ENCODE measurements at regions of chr5 and their contacts with region 1.

Region 1: DNA sequence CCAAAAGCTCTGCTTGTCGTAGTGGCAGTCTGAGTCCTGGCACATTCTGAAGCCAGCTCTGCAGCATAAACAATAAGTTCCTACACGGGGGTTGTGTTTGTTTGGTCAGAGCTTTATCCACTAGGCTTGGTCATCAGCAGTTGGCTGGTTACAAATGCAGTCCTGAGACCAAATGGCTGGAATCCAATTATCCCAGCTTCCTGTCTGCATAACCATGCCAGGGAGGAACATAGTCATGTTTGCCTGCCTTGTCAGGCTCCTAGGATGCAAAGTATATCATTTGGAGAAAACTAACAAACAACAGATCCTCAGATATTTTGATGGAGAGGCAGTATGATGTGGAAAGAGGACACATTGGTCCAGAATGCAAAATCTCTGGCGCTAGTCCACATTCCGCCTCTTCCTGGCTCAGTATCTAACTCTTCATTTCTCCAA is 85.8 kb downstream of the FBXO38 start:
- DNase-seq: no peak
- H3K4me3 ChIP-seq: no peak overlapping the region
- H3K27me3 ChIP-seq: no peaks in the 10 kb centered on the region
- CTCF ChIP-seq: no peak

Region 2: GRCh38 chr5:148482691-148483462 is 13.4 kb after region 1 on chr5:
- CTCF ChIA-PET with region 1: interaction called, 10 read pairs
- POLR2A ChIA-PET with region 1: no interaction called
- DNase-seq: no peak
- H3K4me3 ChIP-seq: no peak overlapping the region
- H3K27me3 ChIP-seq: no peaks in the 10 kb centered on the region
- CTCF ChIP-seq: peak; percentile 71

Region 3: GRCh38 chr5:148542812-148543211 is 73.3 kb after region 1 on chr5:
- CTCF ChIA-PET with region 1: no interaction called
- POLR2A ChIA-PET with region 1: no interaction called
- DNase-seq: peak; percentile 10
- H3K4me3 ChIP-seq: no peak overlapping the region
- H3K27me3 ChIP-seq: no peaks in the 10 kb centered on the region
- CTCF ChIP-seq: no peak